Activated T-helper 2 cell treated with anti-CD3 and anti-CD28 coated beads, Interferon-gamma antibody, Interleukin-2, Interleukin-4, amounts not matched to agents 10 μg/mL and 5 μg/mL and 100 μg/mL, durations not matched to agents 14 hours and 24 hours and 36 hours (primary cell): ENCODE measurements at regions of chr6 and their contacts with region 1.

Region 1: GRCh38 chr6:118606268-118606667 is 45.1 kb downstream of the CEP85L start:
- DNase-seq: no peak
- H3K4me3 Mint-ChIP-seq: no peak overlapping the region
- H3K27ac Mint-ChIP-seq: no peak overlapping the region
- H3K4me1 Mint-ChIP-seq: peaks cover 33% of the 10 kb centered on the region
- H3K27me3 Mint-ChIP-seq: no peaks in the 10 kb centered on the region

Region 2: DNA sequence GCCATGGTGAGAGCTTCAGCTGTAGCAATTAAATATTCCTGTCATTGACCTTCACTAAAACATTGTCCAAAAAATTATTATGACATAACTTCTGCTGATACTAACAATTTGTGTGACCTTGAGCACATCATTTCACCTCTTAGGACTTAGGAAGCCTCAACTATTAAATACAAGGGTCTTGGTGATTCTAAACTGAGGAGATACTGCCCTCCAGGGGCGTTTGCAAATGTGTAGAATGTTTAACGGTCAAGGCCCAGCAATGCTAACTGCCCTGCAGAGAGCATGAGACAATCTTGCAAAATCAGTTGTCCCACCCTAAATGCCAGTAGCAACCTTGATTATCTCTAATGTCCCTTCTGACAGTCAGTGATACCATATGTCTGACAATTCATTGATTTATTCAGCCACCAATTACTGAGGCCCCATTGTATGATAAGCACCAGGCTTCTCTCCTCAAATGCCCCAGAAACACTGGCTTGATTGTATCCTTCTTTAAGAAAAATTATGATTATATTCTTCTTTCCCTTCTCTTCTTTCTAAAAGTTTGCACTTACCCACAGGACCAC is 342.3 kb before region 1 on chr6:
- intact Hi-C with region 1: no loop called
- DNase-seq: no peak
- H3K4me3 Mint-ChIP-seq: no peak overlapping the region
- H3K27ac Mint-ChIP-seq: no peak overlapping the region
- H3K4me1 Mint-ChIP-seq: no peaks in the 10 kb centered on the region
- H3K27me3 Mint-ChIP-seq: peaks cover 4% of the 10 kb centered on the region

Region 3: DNA sequence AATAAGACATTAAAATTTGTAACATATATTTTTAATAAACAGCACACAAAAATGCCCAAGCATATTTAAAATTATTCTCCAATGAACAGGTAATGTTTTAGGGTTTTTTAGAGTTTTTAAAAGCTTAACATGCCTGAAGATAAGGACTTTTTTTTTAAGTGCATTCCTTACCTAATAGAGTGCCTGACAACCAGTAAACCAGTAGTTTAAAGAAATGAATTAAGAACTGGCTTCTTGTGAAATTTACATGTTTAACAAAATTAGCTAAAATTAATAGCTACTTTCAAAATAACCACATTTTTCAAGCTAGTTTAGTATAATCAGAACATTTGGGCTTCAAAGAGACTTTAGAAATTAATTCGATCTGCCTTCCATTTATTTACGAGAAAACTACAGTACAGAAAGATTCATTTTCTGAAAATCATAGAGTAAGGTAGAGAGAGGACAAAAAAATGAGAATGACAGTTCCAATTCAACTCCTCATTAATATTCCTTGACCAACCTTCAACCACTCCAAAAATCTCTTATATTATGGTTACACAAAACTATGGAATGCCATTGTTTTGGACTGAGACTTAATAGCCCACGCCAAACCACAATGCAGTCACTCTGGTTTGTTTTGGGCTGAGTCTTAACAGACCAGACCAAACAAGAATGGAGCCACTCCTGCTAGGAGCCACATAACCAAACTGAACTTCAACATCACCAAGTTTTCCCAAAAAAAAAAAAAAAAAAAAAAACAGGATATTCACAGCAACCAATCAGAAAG is 63.9 kb before region 1 on chr6:
- intact Hi-C with region 1: no loop called
- DNase-seq: no peak
- H3K4me3 Mint-ChIP-seq: no peak overlapping the region
- H3K27ac Mint-ChIP-seq: no peak overlapping the region
- H3K4me1 Mint-ChIP-seq: peaks cover 11% of the 10 kb centered on the region
- H3K27me3 Mint-ChIP-seq: no peaks in the 10 kb centered on the region

Region 4: GRCh38 chr6:118558464-118559217 is 47.6 kb before region 1 on chr6:
- intact Hi-C with region 1: loop called (anchors 5 kb)
- DNase-seq: no peak
- H3K4me3 Mint-ChIP-seq: peak overlapping the region; percentile 69
- H3K27ac Mint-ChIP-seq: peak overlapping the region; percentile 92
- H3K4me1 Mint-ChIP-seq: peaks cover 25% of the 10 kb centered on the region
- H3K27me3 Mint-ChIP-seq: no peaks in the 10 kb centered on the region